ENCODE measurements at regions of chr11 and their contacts with region 1.

Region 1: GRCh38 chr11:124673333-124674167 is at the starts of genes SIAE and SPA17:
- DNase-seq: peak; percentile 93
- H3K4me3 Mint-ChIP-seq: peak within 1 kb of the TSS; percentile 88
- H3K27ac Mint-ChIP-seq: peak within 1 kb of the TSS; percentile 75
- H3K4me1 Mint-ChIP-seq: peaks cover 26% of the 10 kb centered on the region
- H3K27me3 Mint-ChIP-seq: no peaks in the 10 kb centered on the region
- total RNA-seq, gene SIAE: 7.8 to 10.8 TPM
- total RNA-seq, gene SPA17: 3.9 to 5.1 TPM

Region 2: DNA sequence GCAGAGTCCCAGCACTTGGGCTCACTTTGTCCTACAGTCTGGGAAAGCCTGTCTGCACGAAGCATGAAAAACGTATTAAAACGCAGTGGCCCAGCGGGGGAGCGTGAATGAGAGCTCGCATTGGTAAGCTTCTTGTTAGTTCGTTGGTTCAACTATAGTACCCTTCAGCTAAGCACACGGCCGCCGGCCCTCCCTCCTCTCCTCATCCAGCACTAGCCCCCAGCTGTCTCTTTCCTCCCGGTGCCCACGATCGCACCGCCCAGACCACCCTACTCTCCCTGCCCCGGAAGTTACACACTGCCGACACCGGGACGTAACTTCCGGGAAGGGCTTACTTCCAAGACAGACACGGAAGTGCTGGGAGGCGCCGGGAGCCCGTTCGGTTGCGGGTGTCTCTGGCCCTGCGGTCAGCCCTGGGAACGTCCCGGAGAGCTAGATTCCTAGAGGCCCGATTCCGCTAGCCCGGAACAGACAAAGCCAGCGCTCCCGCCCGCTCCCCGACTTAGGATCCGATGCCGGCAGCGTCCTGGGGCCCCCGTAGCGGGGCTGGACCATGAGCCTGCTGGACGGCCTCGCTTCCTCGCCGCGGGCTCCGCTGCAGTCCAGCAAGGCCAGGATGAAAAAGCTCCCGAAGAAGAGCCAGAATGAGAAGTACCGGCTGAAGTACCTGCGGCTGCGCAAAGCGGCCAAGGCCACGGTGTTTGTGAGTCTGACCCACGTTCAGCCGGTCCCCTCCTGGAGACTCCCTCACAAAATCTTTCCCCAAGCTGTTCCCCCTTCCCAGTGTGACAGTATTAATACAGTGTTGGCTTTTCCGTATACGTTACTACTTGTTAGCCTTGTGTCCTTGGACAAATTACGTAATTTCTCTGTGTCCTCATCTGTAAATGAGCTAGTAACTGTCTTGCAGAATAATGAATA is 50.8 kb before region 1 on chr11 and contains the start of gene TBRG1:
- CTCF ChIA-PET with region 1: interaction called, 4 read pairs
- intact Hi-C with region 1: loop called (anchors 1 kb)
- DNase-seq: peak; percentile 88
- H3K4me3 Mint-ChIP-seq: peak within 1 kb of the TSS; percentile 96
- H3K27ac Mint-ChIP-seq: peak within 1 kb of the TSS; percentile 96
- H3K4me1 Mint-ChIP-seq: peaks cover 22% of the 10 kb centered on the region
- H3K27me3 Mint-ChIP-seq: no peaks in the 10 kb centered on the region
- total RNA-seq, gene TBRG1: 28.3 to 28.6 TPM

Region 3: GRCh38 chr11:124746621-124747243 is 73.2 kb after region 1 on chr11:
- CTCF ChIA-PET with region 1: interaction called, 13 read pairs
- intact Hi-C with region 1: loop called (anchors 1 kb)
- DNase-seq: peak; percentile 76
- H3K4me3 Mint-ChIP-seq: peak overlapping the region; percentile 83
- H3K27ac Mint-ChIP-seq: peak overlapping the region; percentile 75
- H3K4me1 Mint-ChIP-seq: peaks cover 14% of the 10 kb centered on the region
- H3K27me3 Mint-ChIP-seq: no peaks in the 10 kb centered on the region

Region 4: GRCh38 chr11:124793466-124794278 is 120.1 kb after region 1 on chr11:
- CTCF ChIA-PET with region 1: interaction called, 22 read pairs
- intact Hi-C with region 1: loop called (anchors 1 kb)
- DNase-seq: peak; percentile 30
- H3K4me3 Mint-ChIP-seq: no peak overlapping the region
- H3K27ac Mint-ChIP-seq: no peak overlapping the region
- H3K4me1 Mint-ChIP-seq: peaks cover 41% of the 10 kb centered on the region
- H3K27me3 Mint-ChIP-seq: no peaks in the 10 kb centered on the region

Region 5: GRCh38 chr11:124865921-124866583 is 192.5 kb after region 1 on chr11:
- CTCF ChIA-PET with region 1: interaction called, 22 read pairs
- intact Hi-C with region 1: loop called (anchors 1 kb)
- DNase-seq: peak; percentile 62
- H3K4me3 Mint-ChIP-seq: peak overlapping the region; percentile 42
- H3K27ac Mint-ChIP-seq: no peak overlapping the region
- H3K4me1 Mint-ChIP-seq: peaks cover 37% of the 10 kb centered on the region
- H3K27me3 Mint-ChIP-seq: peaks cover 92% of the 10 kb centered on the region

Region 6: DNA sequence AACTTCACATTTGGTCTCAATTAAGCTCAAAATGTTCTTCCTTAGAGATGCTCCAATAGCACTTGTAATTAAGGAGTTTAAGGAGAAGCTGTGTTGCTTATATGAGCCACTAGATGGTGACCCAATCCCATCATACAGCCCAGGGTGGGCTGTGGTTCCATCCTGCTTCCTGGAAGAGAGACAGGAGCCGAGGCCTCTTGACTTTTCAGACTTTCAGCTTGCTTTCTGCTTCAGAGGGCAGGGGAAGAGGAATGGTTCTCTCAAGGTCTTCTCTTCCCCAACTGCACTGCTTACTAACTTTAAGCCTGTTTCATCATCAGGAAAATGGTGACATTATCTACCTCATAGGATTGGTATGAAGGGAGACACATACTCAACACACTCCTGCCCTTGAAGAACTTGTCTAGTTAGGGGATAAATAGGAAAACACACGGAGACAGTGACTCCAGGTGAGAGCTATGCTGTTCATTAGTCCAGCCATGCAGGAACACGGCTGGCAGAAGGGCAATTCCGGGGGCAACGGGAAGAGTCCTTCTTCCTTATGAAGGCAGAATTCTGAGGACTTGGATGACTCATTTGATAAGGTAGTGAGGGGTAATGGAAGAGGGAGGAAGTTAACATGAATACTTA is 417.8 kb after region 1 on chr11:
- CTCF ChIA-PET with region 1: no interaction called
- intact Hi-C with region 1: no loop called
- DNase-seq: no peak
- H3K4me3 Mint-ChIP-seq: no peak overlapping the region
- H3K27ac Mint-ChIP-seq: no peak overlapping the region
- H3K4me1 Mint-ChIP-seq: no peaks in the 10 kb centered on the region
- H3K27me3 Mint-ChIP-seq: no peaks in the 10 kb centered on the region

Region 7: DNA sequence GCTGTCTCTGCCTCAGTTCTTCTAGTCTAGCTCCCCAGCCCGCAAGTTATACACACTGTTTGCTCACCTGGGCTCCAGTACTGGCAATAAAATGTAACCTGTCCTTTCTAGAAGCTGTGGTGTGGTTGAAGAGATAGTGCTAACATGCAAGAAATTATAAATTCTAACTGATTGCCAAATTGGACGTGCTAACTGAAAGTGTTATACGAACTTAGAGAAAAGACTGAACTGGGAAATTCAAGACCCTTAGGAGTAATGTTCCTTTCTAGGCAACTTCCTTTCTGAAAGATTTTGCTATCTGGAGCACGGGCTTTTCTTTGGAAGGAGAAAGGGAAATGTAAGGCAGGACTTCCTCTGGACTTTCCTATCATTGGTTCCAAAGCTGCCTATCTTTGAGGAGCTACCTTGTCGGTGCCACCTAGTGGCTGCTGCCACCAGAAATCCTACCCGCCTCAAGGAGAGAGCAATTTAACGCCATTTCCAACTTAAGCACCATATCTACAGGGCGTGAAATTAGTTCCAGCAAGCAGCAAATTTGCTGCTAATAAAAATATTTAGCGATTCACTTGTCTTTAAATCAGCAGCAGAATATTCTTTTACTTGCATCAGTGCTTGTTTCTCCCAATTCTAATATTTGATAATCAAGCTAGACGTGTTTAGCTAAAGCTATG is 450.5 kb after region 1 on chr11:
- CTCF ChIA-PET with region 1: no interaction called
- intact Hi-C with region 1: no loop called
- DNase-seq: peak; percentile 61
- H3K4me3 Mint-ChIP-seq: no peak overlapping the region
- H3K27ac Mint-ChIP-seq: no peak overlapping the region
- H3K4me1 Mint-ChIP-seq: no peaks in the 10 kb centered on the region
- H3K27me3 Mint-ChIP-seq: peaks cover 16% of the 10 kb centered on the region

Region 8: DNA sequence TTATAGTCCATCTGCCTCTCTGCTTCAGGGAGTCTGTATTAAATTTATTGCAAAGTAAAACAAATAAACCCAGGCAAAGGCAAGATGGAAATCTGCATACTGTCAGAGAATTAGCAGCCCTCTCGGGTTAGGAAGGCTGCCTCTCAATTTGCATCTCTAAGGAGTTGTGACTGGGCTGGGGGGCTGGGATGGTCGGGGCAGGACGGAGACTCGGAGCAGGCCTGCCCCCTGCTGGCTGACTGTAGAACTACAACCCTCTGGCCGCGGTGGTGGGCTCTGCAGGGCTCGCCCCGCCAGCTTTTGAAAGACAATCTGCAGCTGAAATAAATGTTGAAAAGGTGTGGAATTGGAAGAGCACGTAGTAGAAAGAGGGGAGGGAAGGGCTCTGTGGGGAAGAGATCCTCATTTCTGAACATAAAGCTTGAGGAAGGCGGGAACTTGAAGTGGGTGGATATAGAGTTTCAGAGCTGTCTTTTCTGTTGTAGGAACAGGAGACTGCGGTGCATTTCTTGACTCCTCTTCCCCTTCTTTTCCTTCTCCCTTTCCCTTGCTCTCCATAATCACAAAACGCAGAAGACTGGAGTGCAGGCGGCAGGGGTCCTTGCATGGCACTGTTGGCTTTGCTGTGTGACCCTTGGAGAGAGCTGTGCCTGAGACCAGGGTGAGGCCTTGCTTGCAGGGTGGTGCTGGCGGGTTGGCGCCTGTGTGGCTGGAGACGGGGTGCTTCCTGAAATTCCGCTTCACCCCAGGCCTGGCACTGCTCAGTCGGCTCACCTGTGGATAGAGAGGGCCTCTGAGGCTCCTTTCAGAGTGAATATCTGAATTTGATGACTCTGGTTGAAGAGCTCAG is 468.4 kb after region 1 on chr11:
- CTCF ChIA-PET with region 1: no interaction called
- intact Hi-C with region 1: loop called (anchors 10 kb)
- DNase-seq: peak; percentile 46
- H3K4me3 Mint-ChIP-seq: no peak overlapping the region
- H3K27ac Mint-ChIP-seq: no peak overlapping the region
- H3K4me1 Mint-ChIP-seq: peaks cover 3% of the 10 kb centered on the region
- H3K27me3 Mint-ChIP-seq: peaks cover 15% of the 10 kb centered on the region